Ascending aorta (tissue), 2 donors: ENCODE measurements at regions of chr15 and their contacts with region 1.

Region 1: DNA sequence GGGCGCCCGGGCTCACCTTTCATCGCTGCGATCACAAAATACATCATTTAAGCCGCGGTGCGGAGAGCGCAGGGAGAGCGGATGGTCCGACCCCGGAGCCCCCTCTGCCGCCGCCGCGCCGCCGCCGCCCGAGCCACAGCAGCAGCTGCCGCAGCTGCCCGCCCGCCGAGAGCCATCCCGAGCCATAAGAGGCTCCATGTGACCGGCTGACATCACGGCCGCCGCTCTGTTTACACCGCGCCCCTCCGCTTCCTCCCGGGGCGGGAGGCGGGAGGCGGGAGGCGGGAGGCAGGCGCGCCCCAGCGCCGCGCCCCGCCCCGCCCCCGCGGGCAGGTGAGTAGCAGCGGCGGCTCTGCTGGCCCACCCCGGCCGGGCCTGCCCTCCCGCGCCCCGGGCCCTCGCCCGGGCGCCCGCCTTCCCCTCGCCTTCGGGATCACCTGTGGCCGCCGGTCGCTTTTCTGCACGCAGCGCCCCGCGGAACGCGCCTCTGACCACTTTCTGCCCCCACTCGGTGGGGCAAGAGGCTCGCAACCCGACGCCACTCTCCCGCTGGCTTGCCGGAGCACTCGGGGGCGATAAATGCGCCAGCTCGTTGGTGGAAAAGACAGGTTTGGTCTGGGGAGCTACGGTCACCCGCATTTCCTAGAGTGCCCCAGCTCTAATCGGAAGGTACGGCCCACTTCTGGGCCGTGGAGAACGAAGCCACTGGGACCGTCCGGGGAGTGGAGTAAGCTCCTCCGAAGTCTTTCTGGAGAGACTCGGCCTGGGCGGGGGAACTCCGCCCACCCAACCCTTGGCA is 113.6 kb upstream of the ICE2 start:
- DNase-seq: peak; percentile 48 to 90
- H3K4me3 ChIP-seq: peak overlapping the region; percentile 80 to 99
- H3K27ac ChIP-seq: peak overlapping the region; percentile 80 to 89
- H3K4me1 ChIP-seq: peaks cover 0 to 11% of the 10 kb centered on the region in 2 donors
- H3K27me3 ChIP-seq: no peaks in the 10 kb centered on the region
- CTCF ChIP-seq: peak in 2 of 3 experiments; percentile 27 to 35

Region 2: DNA sequence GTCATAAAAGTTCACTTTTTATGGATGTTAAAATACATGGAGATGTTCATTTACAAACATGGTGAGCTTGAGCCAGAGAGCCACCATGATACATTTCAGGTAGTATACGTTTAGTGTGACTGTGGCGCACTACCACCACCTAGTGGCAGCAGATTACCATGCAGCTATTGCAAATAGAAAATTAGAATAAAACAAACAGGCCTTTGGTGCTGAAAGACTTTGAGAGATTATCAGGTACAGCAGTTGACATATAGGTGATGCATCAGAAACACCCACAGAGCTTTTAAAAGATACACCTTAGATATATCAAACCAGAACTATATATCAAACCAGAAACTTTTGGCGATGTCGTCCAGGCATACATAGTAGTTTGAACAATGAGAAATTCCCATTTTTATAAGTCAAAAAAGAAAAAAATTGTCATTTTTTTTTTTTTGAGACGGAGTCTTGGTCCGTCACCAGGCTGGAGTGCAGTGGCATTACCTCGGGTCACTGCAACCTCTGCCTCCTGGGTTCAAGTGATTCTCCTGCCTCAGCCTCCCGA is 71.7 kb before region 1 on chr15:
- intact Hi-C with region 1: no loop called
- DNase-seq: peak in 1 of 2 donors; percentile 83
- H3K4me3 ChIP-seq: no peak overlapping the region
- H3K27ac ChIP-seq: no peak overlapping the region
- H3K4me1 ChIP-seq: no peaks in the 10 kb centered on the region
- H3K27me3 ChIP-seq: no peaks in the 10 kb centered on the region
- CTCF ChIP-seq: peak; percentile 61 to 83 (median 80)

Region 3: DNA sequence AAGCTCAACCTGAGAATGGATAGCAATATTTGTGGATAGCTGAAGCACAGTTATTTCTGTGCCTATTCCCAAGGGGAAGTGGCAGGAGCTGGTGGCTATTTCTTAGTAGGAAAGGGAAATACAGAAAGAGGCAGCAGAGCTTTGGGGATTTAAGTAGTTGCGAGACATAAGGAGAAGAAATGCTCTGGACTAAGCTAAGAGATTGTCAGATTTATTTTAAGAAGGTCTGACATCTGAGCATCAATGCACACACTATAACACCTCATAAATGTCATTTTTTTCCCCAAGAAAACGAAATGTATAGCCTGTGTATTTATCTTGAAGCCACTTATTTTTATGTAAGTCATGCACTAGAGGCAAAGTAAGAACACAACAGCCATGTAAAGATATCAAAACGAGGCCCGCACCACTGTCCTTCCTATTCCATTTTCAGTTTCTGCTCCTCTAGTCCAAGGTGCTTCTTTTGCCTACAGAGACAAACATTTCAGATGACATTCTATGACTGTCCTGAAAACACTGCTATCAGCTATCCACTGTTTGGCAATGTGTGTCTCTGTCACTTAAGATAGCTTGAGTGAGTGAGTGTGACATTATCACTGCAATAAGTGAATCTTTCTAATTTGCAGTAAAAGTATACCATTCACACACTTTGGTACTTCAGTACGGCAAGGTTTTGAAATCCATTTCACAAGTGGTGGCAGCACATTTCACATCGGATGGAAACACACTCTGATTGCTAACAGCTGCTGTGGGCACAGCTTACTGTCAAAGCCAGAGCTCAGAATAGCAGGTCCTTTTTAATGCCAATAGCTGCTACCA is 50.9 kb before region 1 on chr15:
- intact Hi-C with region 1: no loop called
- DNase-seq: no peak
- H3K4me3 ChIP-seq: no peak overlapping the region
- H3K27ac ChIP-seq: no peak overlapping the region
- H3K4me1 ChIP-seq: no peaks in the 10 kb centered on the region
- H3K27me3 ChIP-seq: no peaks in the 10 kb centered on the region
- CTCF ChIP-seq: no peak

Region 4: DNA sequence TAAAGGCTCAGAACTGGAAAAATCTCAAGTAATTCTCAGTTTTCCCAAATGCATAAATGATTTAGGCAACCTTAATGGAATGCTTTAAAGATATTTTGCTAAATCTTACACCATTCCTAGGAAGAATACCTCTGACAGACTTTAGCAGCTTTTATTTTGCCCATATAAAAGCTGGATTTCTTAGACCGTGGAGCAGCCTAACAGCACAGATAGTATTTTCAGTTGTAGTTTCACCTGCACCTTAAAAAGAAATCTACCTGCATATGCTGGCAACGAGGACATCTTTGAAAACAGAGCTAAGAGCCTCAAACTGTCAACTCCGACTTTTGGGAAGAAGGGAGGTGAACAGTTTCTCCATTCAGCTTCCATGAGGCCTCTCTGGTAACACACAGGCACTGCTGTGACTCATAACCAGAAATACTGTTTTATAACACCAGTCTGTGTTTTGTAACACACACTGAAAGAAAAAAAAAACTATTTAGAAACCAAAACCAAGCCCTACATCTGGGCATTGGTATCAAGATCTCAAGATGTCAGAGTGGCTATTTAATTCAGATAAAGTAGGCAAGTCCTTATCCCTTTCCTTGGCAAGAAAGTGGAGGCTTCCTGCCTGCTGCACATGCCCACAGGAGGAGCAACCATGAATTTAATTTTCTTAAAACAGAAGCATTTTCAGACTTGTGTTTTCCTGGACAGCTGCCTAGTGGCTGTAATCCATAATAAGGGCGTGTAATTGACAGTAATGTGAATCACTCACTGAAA is 67.9 kb after region 1 on chr15:
- intact Hi-C with region 1: loop called (anchors 1 kb)
- DNase-seq: peak in 1 of 2 donors; percentile 66
- H3K4me3 ChIP-seq: peak overlapping the region in 1 of 2 donors; percentile 30
- H3K27ac ChIP-seq: peak overlapping the region; percentile 57 to 65
- H3K4me1 ChIP-seq: peaks cover 0 to 7% of the 10 kb centered on the region in 2 donors
- H3K27me3 ChIP-seq: no peaks in the 10 kb centered on the region
- CTCF ChIP-seq: no peak

Region 5: GRCh38 chr15:60804986-60805949 is 212.7 kb after region 1 on chr15:
- intact Hi-C with region 1: loop called (anchors 5 kb)
- DNase-seq: peak; percentile 61 to 80
- H3K4me3 ChIP-seq: no peak overlapping the region
- H3K27ac ChIP-seq: peak overlapping the region in 1 of 2 donors; percentile 13
- H3K4me1 ChIP-seq: peaks cover 6 to 7% of the 10 kb centered on the region in 2 donors
- H3K27me3 ChIP-seq: no peaks in the 10 kb centered on the region
- CTCF ChIP-seq: no peak

Region 6: DNA sequence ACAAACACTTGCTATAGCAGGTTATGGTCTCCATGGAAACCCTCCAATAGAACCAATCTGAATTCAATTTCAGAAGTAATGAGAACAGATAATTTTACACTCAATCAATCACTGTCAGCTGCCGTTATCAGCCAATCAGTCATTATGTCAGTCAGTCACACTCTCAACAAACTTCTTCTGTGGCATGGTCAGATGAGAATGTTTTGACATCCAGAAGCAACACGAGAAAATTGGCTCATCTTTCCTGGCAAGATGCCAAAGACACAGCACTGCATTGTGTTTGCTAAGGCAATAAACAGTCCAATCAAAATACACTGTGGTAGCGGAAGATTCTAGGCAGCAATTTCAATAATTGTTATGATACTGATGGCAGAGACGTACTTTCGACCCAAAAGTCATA is 445.8 kb after region 1 on chr15:
- intact Hi-C with region 1: loop called (anchors 5 kb)
- DNase-seq: no peak
- H3K4me3 ChIP-seq: peak overlapping the region in 1 of 2 donors; percentile 16
- H3K27ac ChIP-seq: peak overlapping the region; percentile 42 to 60
- H3K4me1 ChIP-seq: peaks cover 9 to 20% of the 10 kb centered on the region in 2 donors
- H3K27me3 ChIP-seq: no peaks in the 10 kb centered on the region
- CTCF ChIP-seq: no peak